ENCODE measurements at regions of chr2 and their contacts with region 1.

Region 1: GRCh38 chr2:126971481-126972278 is 73.0 kb downstream of the TEX51 start:
- DNase-seq: peak; percentile 38 to 78 (median 66)
- ATAC-seq: peak; percentile 95
- H3K4me3 ChIP-seq: peak overlapping the region; percentile 32 to 49
- H3K4me3 Mint-ChIP-seq: peak overlapping the region; percentile 76
- H3K27ac ChIP-seq: no peak overlapping the region
- H3K27ac Mint-ChIP-seq: no peak overlapping the region
- H3K4me1 ChIP-seq: peaks cover 12% of the 10 kb centered on the region
- H3K4me1 Mint-ChIP-seq: peaks cover 4% of the 10 kb centered on the region
- H3K27me3 ChIP-seq: peaks cover 0 to 4% of the 10 kb centered on the region in 2 experiments
- H3K27me3 Mint-ChIP-seq: peaks cover 39% of the 10 kb centered on the region
- CTCF ChIP-seq: peak; percentile 92

Region 2: GRCh38 chr2:126244937-126245336 is 726.7 kb before region 1 on chr2:
- CTCF ChIA-PET with region 1: no interaction called
- POLR2A ChIA-PET with region 1: no interaction called
- intact Hi-C with region 1: loop called in 1 of 2 experiments (anchors 10 kb)
- DNase-seq: peak in 4 of 9 experiments; percentile 9 to 20 (median 15)
- ATAC-seq: no peak
- H3K4me3 ChIP-seq: no peak overlapping the region
- H3K4me3 Mint-ChIP-seq: no peak overlapping the region
- H3K27ac ChIP-seq: no peak overlapping the region
- H3K27ac Mint-ChIP-seq: no peak overlapping the region
- H3K4me1 ChIP-seq: no peaks in the 10 kb centered on the region
- H3K4me1 Mint-ChIP-seq: no peaks in the 10 kb centered on the region
- H3K27me3 ChIP-seq: no peaks in the 10 kb centered on the region
- H3K27me3 Mint-ChIP-seq: peaks cover 7% of the 10 kb centered on the region
- CTCF ChIP-seq: no peak

Region 3: GRCh38 chr2:126886211-126886915 is 85.3 kb before region 1 on chr2:
- CTCF ChIA-PET with region 1: interaction called, 9 read pairs
- POLR2A ChIA-PET with region 1: no interaction called
- intact Hi-C with region 1: loop called in 1 of 2 experiments (anchors 5 kb)
- DNase-seq: peak in 7 of 9 experiments; percentile 5 to 64 (median 27)
- ATAC-seq: peak; percentile 59
- H3K4me3 ChIP-seq: peak overlapping the region in 1 of 2 experiments; percentile 1
- H3K4me3 Mint-ChIP-seq: no peak overlapping the region
- H3K27ac ChIP-seq: no peak overlapping the region
- H3K27ac Mint-ChIP-seq: no peak overlapping the region
- H3K4me1 ChIP-seq: peaks cover 6% of the 10 kb centered on the region
- H3K4me1 Mint-ChIP-seq: peaks cover 4% of the 10 kb centered on the region
- H3K27me3 ChIP-seq: peaks cover 0 to 5% of the 10 kb centered on the region in 2 experiments
- H3K27me3 Mint-ChIP-seq: peaks cover 21% of the 10 kb centered on the region
- CTCF ChIP-seq: peak; percentile 25

Region 4: GRCh38 chr2:126953483-126953882 is 18.2 kb before region 1 on chr2:
- CTCF ChIA-PET with region 1: interaction called, 22 read pairs
- POLR2A ChIA-PET with region 1: interaction called, 3 read pairs
- intact Hi-C with region 1: no loop called
- DNase-seq: peak in 1 of 9 experiments; percentile 29
- ATAC-seq: no peak
- H3K4me3 ChIP-seq: no peak overlapping the region
- H3K4me3 Mint-ChIP-seq: no peak overlapping the region
- H3K27ac ChIP-seq: no peak overlapping the region
- H3K27ac Mint-ChIP-seq: no peak overlapping the region
- H3K4me1 ChIP-seq: peaks cover 3% of the 10 kb centered on the region
- H3K4me1 Mint-ChIP-seq: peaks cover 18% of the 10 kb centered on the region
- H3K27me3 ChIP-seq: no peaks in the 10 kb centered on the region
- H3K27me3 Mint-ChIP-seq: peaks cover 30% of the 10 kb centered on the region
- CTCF ChIP-seq: no peak

Region 5: GRCh38 chr2:126995621-126996377 is 24.1 kb after region 1 on chr2:
- CTCF ChIA-PET with region 1: no interaction called
- POLR2A ChIA-PET with region 1: no interaction called
- intact Hi-C with region 1: no loop called
- DNase-seq: no peak
- ATAC-seq: no peak
- H3K4me3 ChIP-seq: no peak overlapping the region
- H3K4me3 Mint-ChIP-seq: no peak overlapping the region
- H3K27ac ChIP-seq: no peak overlapping the region
- H3K27ac Mint-ChIP-seq: no peak overlapping the region
- H3K4me1 ChIP-seq: no peaks in the 10 kb centered on the region
- H3K4me1 Mint-ChIP-seq: no peaks in the 10 kb centered on the region
- H3K27me3 ChIP-seq: no peaks in the 10 kb centered on the region
- H3K27me3 Mint-ChIP-seq: peaks cover 15% of the 10 kb centered on the region
- CTCF ChIP-seq: no peak